Endothelial cell of umbilical vein (primary cell): ENCODE measurements at regions of chr1 and their contacts with region 1.

Region 1: GRCh38 chr1:244652699-244653466 is at the start of gene DESI2:
- DNase-seq: peak; percentile 99
- H3K4me3 ChIP-seq: peak within 1 kb of the TSS; percentile 58 to 98 (median 90)
- H3K27ac ChIP-seq: peak within 1 kb of the TSS; percentile 83
- H3K4me1 ChIP-seq: peaks cover 16% of the 10 kb centered on the region
- H3K27me3 ChIP-seq: peaks cover 2 to 3% of the 10 kb centered on the region in 2 experiments
- CTCF ChIP-seq: peak; percentile 31 to 54
- POLR2A ChIP-seq: peak; percentile 96
- total RNA-seq, gene DESI2: 37.2 TPM in 2 replicates

Region 2: DNA sequence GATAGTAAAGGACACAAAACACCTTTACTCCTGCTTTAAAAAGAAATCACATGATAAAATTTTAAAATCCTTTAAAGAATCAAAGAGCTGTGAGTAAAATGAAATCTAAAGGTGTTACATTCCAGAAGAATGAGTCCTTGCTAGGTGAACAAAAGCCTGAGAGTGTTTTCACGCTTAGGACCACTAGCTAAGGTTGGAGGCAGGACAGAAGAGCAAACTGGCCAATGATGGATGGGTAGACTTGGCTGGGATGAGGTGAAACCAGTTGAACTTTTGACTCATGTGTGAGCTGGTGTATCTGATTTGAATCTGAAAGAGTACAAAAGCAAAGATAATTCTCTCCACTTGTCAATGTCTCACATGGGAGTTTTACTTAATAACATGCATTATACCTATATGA is 156.7 kb before region 1 on chr1:
- CTCF ChIA-PET with region 1: no interaction called
- POLR2A ChIA-PET with region 1: no interaction called
- dilution Hi-C with region 1: no loop called
- intact Hi-C with region 1: no loop called
- DNase-seq: no peak
- H3K4me3 ChIP-seq: no peak overlapping the region
- H3K27ac ChIP-seq: no peak overlapping the region
- H3K4me1 ChIP-seq: no peaks in the 10 kb centered on the region
- H3K27me3 ChIP-seq: no peaks in the 10 kb centered on the region
- CTCF ChIP-seq: no peak
- POLR2A ChIP-seq: no peak

Region 3: GRCh38 chr1:244730153-244730933 is 77.5 kb after region 1 on chr1:
- CTCF ChIA-PET with region 1: interaction called, 4 read pairs
- POLR2A ChIA-PET with region 1: no interaction called
- dilution Hi-C with region 1: no loop called
- intact Hi-C with region 1: loop called (anchors 1 kb)
- DNase-seq: peak; percentile 49
- H3K4me3 ChIP-seq: peak overlapping the region; percentile 46 to 67 (median 61)
- H3K27ac ChIP-seq: no peak overlapping the region
- H3K4me1 ChIP-seq: peaks cover 8% of the 10 kb centered on the region
- H3K27me3 ChIP-seq: no peaks in the 10 kb centered on the region
- CTCF ChIP-seq: no peak
- POLR2A ChIP-seq: no peak

Region 4: GRCh38 chr1:244796718-244797406 is 144.0 kb after region 1 on chr1:
- CTCF ChIA-PET with region 1: interaction called, 17 read pairs
- POLR2A ChIA-PET with region 1: no interaction called
- dilution Hi-C with region 1: no loop called
- intact Hi-C with region 1: loop called (anchors 2 kb)
- DNase-seq: peak; percentile 70
- H3K4me3 ChIP-seq: no peak overlapping the region
- H3K27ac ChIP-seq: no peak overlapping the region
- H3K4me1 ChIP-seq: no peaks in the 10 kb centered on the region
- H3K27me3 ChIP-seq: no peaks in the 10 kb centered on the region
- CTCF ChIP-seq: peak; percentile 63 to 69
- POLR2A ChIP-seq: no peak

Region 5: GRCh38 chr1:244864253-244865027 is 211.6 kb after region 1 on chr1 and contains the start of gene HNRNPU:
- CTCF ChIA-PET with region 1: no interaction called
- POLR2A ChIA-PET with region 1: no interaction called
- dilution Hi-C with region 1: no loop called
- intact Hi-C with region 1: loop called (anchors 1 kb)
- DNase-seq: peak; percentile 98
- H3K4me3 ChIP-seq: peak within 1 kb of the TSS; percentile 87 to 96 (median 94)
- H3K27ac ChIP-seq: peak within 1 kb of the TSS; percentile 89
- H3K4me1 ChIP-seq: peaks cover 30% of the 10 kb centered on the region
- H3K27me3 ChIP-seq: no peaks in the 10 kb centered on the region
- CTCF ChIP-seq: peak; percentile 26 to 33
- POLR2A ChIP-seq: peak; percentile 96
- total RNA-seq, gene HNRNPU: 398 and 417 TPM in 2 replicates

Region 6: GRCh38 chr1:244881552-244882280 is 228.8 kb after region 1 on chr1:
- CTCF ChIA-PET with region 1: no interaction called
- POLR2A ChIA-PET with region 1: interaction called, 16 read pairs
- dilution Hi-C with region 1: no loop called
- intact Hi-C with region 1: no loop called
- DNase-seq: no peak
- H3K4me3 ChIP-seq: no peak overlapping the region
- H3K27ac ChIP-seq: no peak overlapping the region
- H3K4me1 ChIP-seq: no peaks in the 10 kb centered on the region
- H3K27me3 ChIP-seq: no peaks in the 10 kb centered on the region
- CTCF ChIP-seq: no peak
- POLR2A ChIP-seq: no peak

Region 7: DNA sequence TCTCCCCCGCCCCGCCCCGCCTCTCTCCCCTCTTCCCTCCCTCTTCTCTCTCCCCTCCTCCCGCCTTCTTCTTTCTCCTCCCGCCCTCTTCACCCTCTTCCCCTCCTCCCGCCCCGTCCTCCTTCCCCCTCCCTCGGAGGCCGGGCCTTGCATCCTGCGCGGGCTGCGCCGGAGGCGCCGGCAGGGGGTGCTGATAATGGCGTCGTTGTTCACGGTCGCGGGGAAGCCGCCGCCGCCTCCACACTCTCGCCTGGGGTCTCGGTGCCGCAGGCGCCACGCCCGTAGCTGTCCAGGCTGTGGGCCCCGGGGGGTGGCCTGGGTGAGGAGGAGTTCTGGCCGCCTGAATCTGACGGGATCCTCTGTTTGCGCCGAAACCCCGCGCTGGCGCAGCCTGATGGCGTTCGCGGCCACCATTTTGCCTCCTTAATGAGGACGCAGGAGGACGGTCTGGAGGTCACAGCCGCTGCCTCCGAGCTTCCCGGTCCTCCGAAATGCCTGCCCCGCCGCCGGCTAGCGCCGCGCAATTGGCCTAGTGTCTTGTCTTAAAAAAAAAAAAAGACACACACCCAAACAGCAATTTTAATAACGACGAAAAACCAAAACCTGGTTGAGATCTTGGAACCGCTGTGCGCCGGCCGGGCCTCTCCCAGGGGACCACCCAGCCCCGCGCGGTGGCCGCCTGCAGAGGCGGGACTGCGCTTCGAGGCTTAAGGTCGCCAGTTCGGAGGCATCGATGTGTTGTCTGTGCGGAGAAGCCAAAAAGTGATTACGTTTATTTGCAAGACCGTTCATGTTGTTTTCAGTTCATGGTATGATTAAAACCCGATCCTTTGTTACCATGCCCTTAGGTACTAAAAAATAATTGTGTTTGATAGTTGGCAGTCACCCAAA is 318.0 kb after region 1 on chr1:
- CTCF ChIA-PET with region 1: no interaction called
- POLR2A ChIA-PET with region 1: no interaction called
- dilution Hi-C with region 1: no loop called
- intact Hi-C with region 1: loop called (anchors 1 kb)
- DNase-seq: peak; percentile 94
- H3K4me3 ChIP-seq: peak overlapping the region; percentile 37 to 86 (median 80)
- H3K27ac ChIP-seq: peak overlapping the region; percentile 96
- H3K4me1 ChIP-seq: peaks cover 15% of the 10 kb centered on the region
- H3K27me3 ChIP-seq: no peaks in the 10 kb centered on the region
- CTCF ChIP-seq: peak; percentile 47 to 77
- POLR2A ChIP-seq: peak; percentile 86